Gastrocnemius medialis (tissue), 4 donors: ENCODE measurements at regions of chr5 and their contacts with region 1.

Region 1: GRCh38 chr5:41193456-41194205 is 19.7 kb downstream of the C6 start:
- DNase-seq: peak; percentile 89 to 93
- ATAC-seq: peak; percentile 93 to 97
- H3K4me3 ChIP-seq: no peak overlapping the region
- H3K27ac ChIP-seq: peak overlapping the region; percentile 62 to 71 (median 65)
- H3K4me1 ChIP-seq: peaks cover 10 to 27% of the 10 kb centered on the region in 2 donors
- H3K27me3 ChIP-seq: no peaks in the 10 kb centered on the region
- CTCF ChIP-seq: no peak
- POLR2A ChIP-seq: no peak

Region 2: GRCh38 chr5:40991168-40991980 is 202.3 kb before region 1 on chr5:
- in situ Hi-C with region 1: no loop called
- intact Hi-C with region 1: loop called (anchors 10 kb)
- DNase-seq: peak; percentile 34 to 53
- ATAC-seq: peak; percentile 89 to 95
- H3K4me3 ChIP-seq: no peak overlapping the region
- H3K27ac ChIP-seq: peak overlapping the region; percentile 51 to 72 (median 68)
- H3K4me1 ChIP-seq: peaks cover 0 to 10% of the 10 kb centered on the region in 2 donors
- H3K27me3 ChIP-seq: no peaks in the 10 kb centered on the region
- CTCF ChIP-seq: no peak
- POLR2A ChIP-seq: no peak